GM10248 (cell line): ENCODE measurements at regions of chr14 and their contacts with region 1.

Region 1: DNA sequence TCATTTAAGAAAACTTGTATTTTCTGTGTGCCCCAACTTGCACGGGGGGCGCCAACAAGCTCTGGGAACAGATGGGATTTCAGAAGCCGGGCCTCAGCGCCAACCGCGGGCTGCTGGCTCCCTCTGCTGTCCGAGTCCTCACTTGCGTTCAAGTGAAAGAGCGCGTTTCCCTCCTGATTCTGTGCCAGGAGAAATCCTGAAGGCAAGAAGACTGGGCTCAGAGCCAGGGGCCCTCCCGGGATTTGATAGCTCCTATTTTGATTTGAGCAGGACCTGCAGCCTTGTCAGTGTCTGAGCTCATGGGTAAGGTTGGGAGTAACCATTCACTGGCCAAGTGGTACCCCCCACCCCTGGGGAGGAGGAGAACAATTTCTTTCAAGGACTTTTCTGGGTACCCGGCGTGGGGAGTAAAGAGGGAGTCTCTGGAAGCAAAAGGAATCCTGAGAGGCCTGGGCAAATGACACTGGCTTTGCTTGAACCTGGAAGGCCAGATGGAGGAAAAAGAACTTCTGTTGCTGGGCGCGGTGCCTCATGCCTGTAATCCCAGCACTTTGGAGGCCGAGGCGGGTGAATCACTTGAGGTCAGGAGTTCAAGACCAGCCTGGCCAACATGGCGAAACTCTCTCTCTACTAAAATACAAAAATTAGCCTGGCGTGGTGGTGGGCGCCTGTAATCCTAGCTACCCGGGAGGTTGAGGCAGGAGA is 179.0 kb upstream of the RGS6 start:
- DNase-seq: peak; percentile 85
- CTCF ChIP-seq: peak; percentile 86

Region 2: DNA sequence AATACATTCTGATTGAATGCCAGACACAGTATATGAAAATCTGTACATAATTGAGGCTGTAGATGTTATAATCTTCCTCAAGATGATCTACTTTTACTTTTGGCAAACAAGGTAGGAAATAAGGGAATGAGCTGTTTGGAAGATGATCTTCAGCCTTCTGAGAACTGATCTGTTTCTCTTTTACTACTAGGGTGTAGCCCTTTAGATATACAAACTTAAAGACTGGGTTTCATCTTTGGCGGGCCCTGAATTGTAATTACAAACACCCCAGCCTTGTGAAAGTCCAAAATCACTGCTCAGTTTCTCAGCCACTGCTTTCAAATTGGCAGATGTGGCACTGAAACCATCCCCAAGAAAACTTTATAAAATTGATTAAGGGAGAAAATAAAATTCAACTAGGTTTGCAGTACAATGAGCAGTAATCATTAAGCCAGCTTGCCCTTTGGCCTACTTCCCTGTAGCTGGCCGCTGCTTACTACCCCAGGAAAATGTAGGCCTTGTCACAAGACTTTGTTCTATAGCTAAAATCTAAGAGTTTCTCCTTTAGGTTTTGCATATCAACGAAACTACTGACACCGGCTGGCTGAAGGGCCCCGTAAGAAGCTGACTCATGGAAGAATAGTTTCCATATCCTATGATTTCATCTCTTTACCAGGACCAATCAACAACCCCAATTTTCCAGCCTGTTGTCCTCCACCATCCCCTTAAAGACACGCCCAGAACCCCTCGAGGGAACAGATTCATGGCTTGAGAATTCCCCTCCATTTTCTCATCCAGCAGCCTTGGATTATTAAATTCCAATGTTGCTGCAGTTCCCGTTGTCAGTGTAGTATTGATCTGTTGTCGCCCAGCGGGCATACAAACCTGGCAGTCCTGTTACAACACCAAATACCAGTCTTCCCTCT is 635.2 kb before region 1 on chr14:
- CTCF ChIA-PET with region 1: interaction called, 32 read pairs
- POLR2A ChIA-PET with region 1: no interaction called
- DNase-seq: peak; percentile 35
- CTCF ChIP-seq: no peak

Region 3: GRCh38 chr14:71320107-71320733 is 433.1 kb before region 1 on chr14:
- CTCF ChIA-PET with region 1: interaction called, 22 read pairs
- POLR2A ChIA-PET with region 1: no interaction called
- DNase-seq: peak; percentile 96
- CTCF ChIP-seq: no peak

Region 4: DNA sequence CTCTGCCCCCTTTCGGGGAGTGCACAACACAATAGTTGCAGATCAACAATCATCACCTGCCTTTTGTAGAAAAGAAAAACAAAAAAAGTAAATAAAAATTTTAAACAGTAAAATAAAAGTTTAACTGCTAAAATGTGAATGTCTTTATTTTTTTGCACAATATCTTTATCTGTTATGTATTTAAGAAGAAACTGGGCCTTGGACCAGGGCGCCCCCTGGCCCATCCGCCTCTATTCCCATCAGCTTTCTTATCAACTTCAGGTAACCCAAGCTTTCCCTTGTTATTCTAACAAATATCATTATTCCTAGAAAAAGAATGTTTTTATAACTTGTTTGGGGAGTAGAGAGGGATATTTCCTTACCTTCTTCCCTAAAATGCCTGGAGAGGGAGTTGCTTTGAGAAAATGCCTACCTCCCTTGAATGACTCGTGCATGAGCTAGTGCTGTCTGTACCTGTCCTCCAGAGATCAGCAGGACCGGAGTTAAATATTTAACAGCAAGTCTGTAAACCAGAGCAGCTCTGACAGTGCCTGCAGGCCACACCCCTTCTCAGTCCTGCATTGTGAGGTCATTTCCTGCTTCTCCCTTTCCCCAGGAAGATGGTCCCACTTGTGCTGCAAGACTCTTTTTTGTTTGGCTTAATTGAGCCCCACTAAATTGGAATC is 13.9 kb before region 1 on chr14:
- CTCF ChIA-PET with region 1: interaction called, 23 read pairs
- POLR2A ChIA-PET with region 1: no interaction called
- DNase-seq: no peak
- CTCF ChIP-seq: no peak

Region 5: DNA sequence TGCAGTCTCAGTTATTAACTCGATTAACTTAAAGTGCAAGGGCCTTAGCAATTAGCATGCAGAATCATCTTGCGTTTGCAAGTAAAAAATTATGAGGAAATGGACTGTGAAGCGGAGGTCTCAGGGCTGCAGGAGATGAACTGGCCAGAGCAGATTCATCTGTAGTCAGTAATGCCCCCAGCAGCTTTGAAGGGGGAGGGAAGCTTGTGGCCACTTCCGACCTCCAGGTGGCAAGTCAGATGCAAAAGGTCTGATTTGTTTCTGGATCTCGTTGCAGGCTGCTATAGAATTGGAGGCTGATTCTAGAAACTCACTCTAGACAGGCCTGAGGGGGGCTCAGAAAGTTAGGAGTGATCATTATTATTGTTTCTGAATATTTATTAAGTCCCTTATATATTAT is 71.5 kb after region 1 on chr14:
- CTCF ChIA-PET with region 1: no interaction called
- POLR2A ChIA-PET with region 1: no interaction called
- DNase-seq: no peak
- CTCF ChIP-seq: no peak

Region 6: GRCh38 chr14:71855399-71856036 is 102.2 kb after region 1 on chr14:
- CTCF ChIA-PET with region 1: interaction called, 13 read pairs
- POLR2A ChIA-PET with region 1: no interaction called
- DNase-seq: peak; percentile 65
- CTCF ChIP-seq: peak; percentile 85